ENCODE measurements at regions of chr6 and their contacts with region 1.

Region 1: DNA sequence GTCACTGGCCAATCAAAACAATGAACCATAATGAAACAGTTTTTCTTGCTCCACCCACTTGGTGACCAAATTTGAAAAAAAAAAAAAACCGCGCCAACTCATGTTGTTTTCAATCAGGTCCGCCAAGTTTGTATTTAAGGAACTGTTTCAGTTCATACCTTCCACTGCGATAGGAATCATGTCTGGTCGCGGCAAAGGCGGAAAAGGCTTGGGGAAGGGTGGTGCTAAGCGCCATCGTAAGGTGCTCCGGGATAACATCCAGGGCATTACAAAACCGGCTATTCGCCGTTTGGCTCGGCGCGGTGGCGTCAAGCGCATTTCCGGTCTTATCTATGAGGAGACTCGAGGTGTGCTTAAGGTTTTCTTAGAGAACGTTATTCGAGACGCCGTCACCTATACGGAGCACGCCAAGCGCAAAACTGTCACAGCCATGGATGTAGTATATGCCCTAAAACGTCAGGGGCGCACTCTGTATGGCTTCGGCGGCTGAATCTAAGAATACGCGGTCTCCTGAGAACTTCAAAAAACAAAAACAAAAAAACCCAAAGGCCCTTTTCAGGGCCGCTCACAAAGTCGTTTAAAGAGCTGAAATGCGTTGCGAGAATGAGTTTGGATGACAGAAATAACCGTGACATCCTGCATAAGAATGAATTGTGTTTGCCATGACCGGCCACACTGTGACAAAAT is 16.7 kb downstream of the HFE start:
- DNase-seq: peak; percentile 93 to 96 (median 94)
- H3K4me3 ChIP-seq: peak overlapping the region; percentile 36 to 39
- H3K4me3 Mint-ChIP-seq: peak overlapping the region; percentile 84 to 96 (median 92)
- H3K27ac ChIP-seq: peak overlapping the region; percentile 66
- H3K27ac Mint-ChIP-seq: peak overlapping the region; percentile 96 to 100 (median 99)
- H3K4me1 ChIP-seq: peaks cover 17% of the 10 kb centered on the region
- H3K4me1 Mint-ChIP-seq: peaks cover 11 to 19% (median 15%) of the 10 kb centered on the region in 4 donors
- H3K27me3 ChIP-seq: no peaks in the 10 kb centered on the region
- H3K27me3 Mint-ChIP-seq: peaks cover 2 to 6% of the 10 kb centered on the region in 2 donors

Region 2: GRCh38 chr6:25504661-25505060 is 599.3 kb before region 1 on chr6:
- CTCF ChIA-PET with region 1: no interaction called
- POLR2A ChIA-PET with region 1: no interaction called
- intact Hi-C with region 1: no loop called
- DNase-seq: no peak
- H3K4me3 ChIP-seq: no peak overlapping the region
- H3K4me3 Mint-ChIP-seq: no peak overlapping the region
- H3K27ac ChIP-seq: no peak overlapping the region
- H3K27ac Mint-ChIP-seq: no peak overlapping the region
- H3K4me1 ChIP-seq: no peaks in the 10 kb centered on the region
- H3K4me1 Mint-ChIP-seq: no peaks in the 10 kb centered on the region
- H3K27me3 ChIP-seq: no peaks in the 10 kb centered on the region
- H3K27me3 Mint-ChIP-seq: no peaks in the 10 kb centered on the region

Region 3: DNA sequence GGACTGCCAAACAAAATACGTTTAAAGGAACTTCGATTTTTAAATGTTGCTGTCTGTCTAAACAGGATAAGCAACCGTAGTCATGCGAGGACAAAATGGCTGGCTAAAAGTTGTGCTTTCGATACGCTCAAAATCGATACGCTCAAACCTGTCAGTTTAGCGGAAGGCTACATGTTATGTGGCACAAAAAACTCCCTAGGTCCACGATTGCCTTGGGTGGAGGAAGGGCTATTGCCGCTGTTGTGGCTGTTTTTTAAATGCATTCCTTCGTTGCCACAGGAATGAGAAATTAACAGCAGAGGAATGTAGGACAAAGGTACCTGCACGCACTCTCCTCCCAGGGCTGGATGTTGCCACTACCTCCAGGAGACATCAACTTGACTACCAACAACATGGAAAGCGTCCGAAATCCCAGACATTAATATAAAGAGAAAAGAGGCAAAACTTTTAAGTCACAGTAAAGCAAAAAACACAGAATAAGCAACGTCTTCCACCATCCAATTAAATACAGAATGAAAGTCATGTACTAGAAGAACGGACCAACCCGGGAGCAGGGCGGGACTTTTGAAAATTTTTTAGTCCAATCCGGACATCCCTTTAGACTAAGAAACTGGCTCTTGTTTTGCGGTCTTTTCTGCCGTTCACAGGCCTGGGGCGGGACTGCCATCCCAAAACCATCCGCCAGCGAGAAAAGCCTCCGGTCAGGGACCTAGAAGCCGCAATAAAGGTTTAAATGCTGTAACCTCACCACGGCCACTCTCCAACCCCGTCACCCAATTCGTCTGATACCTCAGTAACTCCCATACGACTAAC is 48.9 kb before region 1 on chr6:
- CTCF ChIA-PET with region 1: interaction called, 533 read pairs
- POLR2A ChIA-PET with region 1: interaction called, 86 read pairs
- intact Hi-C with region 1: loop called (anchors 2 kb)
- DNase-seq: peak; percentile 89 to 96 (median 91)
- H3K4me3 ChIP-seq: peak overlapping the region; percentile 67 to 78
- H3K4me3 Mint-ChIP-seq: peak overlapping the region; percentile 93 to 96 (median 94)
- H3K27ac ChIP-seq: peak overlapping the region; percentile 84
- H3K27ac Mint-ChIP-seq: peak overlapping the region; percentile 91 to 98 (median 98)
- H3K4me1 ChIP-seq: peaks cover 24% of the 10 kb centered on the region
- H3K4me1 Mint-ChIP-seq: peaks cover 7 to 34% (median 15%) of the 10 kb centered on the region in 4 donors
- H3K27me3 ChIP-seq: no peaks in the 10 kb centered on the region
- H3K27me3 Mint-ChIP-seq: no peaks in the 10 kb centered on the region

Region 4: GRCh38 chr6:26087284-26088115 is 16.4 kb before region 1 on chr6 and contains the start of gene HFE:
- CTCF ChIA-PET with region 1: interaction called, 80 read pairs
- POLR2A ChIA-PET with region 1: interaction called, 49 read pairs
- intact Hi-C with region 1: no loop called
- DNase-seq: peak in 4 of 5 donors; percentile 24 to 43 (median 26)
- H3K4me3 ChIP-seq: peak within 1 kb of the TSS; percentile 67 to 79
- H3K4me3 Mint-ChIP-seq: peak within 1 kb of the TSS; percentile 77 to 93 (median 90)
- H3K27ac ChIP-seq: peak within 1 kb of the TSS; percentile 68
- H3K27ac Mint-ChIP-seq: peak within 1 kb of the TSS; percentile 71 to 94 (median 90)
- H3K4me1 ChIP-seq: peaks cover 36% of the 10 kb centered on the region
- H3K4me1 Mint-ChIP-seq: peaks cover 20 to 41% (median 28%) of the 10 kb centered on the region in 4 donors
- H3K27me3 ChIP-seq: no peaks in the 10 kb centered on the region
- H3K27me3 Mint-ChIP-seq: no peaks in the 10 kb centered on the region
- total RNA-seq, gene HFE: 3.5 to 4.2 TPM

Region 5: GRCh38 chr6:26175428-26176181 is 71.7 kb after region 1 on chr6:
- CTCF ChIA-PET with region 1: no interaction called
- POLR2A ChIA-PET with region 1: interaction called, 20 read pairs
- intact Hi-C with region 1: no loop called
- DNase-seq: peak; percentile 50 to 73 (median 70)
- H3K4me3 ChIP-seq: no peak overlapping the region
- H3K4me3 Mint-ChIP-seq: peak overlapping the region in 4 of 8 donors; percentile 37 to 70 (median 65)
- H3K27ac ChIP-seq: no peak overlapping the region
- H3K27ac Mint-ChIP-seq: peak overlapping the region; percentile 28 to 89 (median 78)
- H3K4me1 ChIP-seq: peaks cover 37% of the 10 kb centered on the region
- H3K4me1 Mint-ChIP-seq: peaks cover 21 to 40% (median 27%) of the 10 kb centered on the region in 4 donors
- H3K27me3 ChIP-seq: no peaks in the 10 kb centered on the region
- H3K27me3 Mint-ChIP-seq: no peaks in the 10 kb centered on the region

Region 6: GRCh38 chr6:26196846-26197648 is 93.1 kb after region 1 on chr6:
- CTCF ChIA-PET with region 1: no interaction called
- POLR2A ChIA-PET with region 1: interaction called, 74 read pairs
- intact Hi-C with region 1: loop called (anchors 2 kb)
- DNase-seq: peak; percentile 92 to 93 (median 92)
- H3K4me3 ChIP-seq: peak overlapping the region; percentile 83 to 97
- H3K4me3 Mint-ChIP-seq: peak overlapping the region; percentile 94 to 99 (median 97)
- H3K27ac ChIP-seq: peak overlapping the region; percentile 84
- H3K27ac Mint-ChIP-seq: peak overlapping the region; percentile 96 to 100 (median 98)
- H3K4me1 ChIP-seq: peaks cover 43% of the 10 kb centered on the region
- H3K4me1 Mint-ChIP-seq: peaks cover 23 to 57% (median 41%) of the 10 kb centered on the region in 4 donors
- H3K27me3 ChIP-seq: no peaks in the 10 kb centered on the region
- H3K27me3 Mint-ChIP-seq: no peaks in the 10 kb centered on the region

Region 7: GRCh38 chr6:26249957-26250697 is 146.2 kb after region 1 on chr6:
- CTCF ChIA-PET with region 1: no interaction called
- POLR2A ChIA-PET with region 1: interaction called, 11 read pairs
- intact Hi-C with region 1: no loop called
- DNase-seq: peak; percentile 79 to 88 (median 83)
- H3K4me3 ChIP-seq: peak overlapping the region; percentile 86 to 88
- H3K4me3 Mint-ChIP-seq: peak overlapping the region; percentile 92 to 99 (median 98)
- H3K27ac ChIP-seq: peak overlapping the region; percentile 59
- H3K27ac Mint-ChIP-seq: peak overlapping the region; percentile 85 to 97 (median 94)
- H3K4me1 ChIP-seq: peaks cover 25% of the 10 kb centered on the region
- H3K4me1 Mint-ChIP-seq: peaks cover 28 to 53% (median 40%) of the 10 kb centered on the region in 4 donors
- H3K27me3 ChIP-seq: no peaks in the 10 kb centered on the region
- H3K27me3 Mint-ChIP-seq: no peaks in the 10 kb centered on the region

Measured in CD4-positive, alpha-beta memory T cell (primary cell).